ENCODE measurements at regions of chr22 and their contacts with region 1.

Region 1: DNA sequence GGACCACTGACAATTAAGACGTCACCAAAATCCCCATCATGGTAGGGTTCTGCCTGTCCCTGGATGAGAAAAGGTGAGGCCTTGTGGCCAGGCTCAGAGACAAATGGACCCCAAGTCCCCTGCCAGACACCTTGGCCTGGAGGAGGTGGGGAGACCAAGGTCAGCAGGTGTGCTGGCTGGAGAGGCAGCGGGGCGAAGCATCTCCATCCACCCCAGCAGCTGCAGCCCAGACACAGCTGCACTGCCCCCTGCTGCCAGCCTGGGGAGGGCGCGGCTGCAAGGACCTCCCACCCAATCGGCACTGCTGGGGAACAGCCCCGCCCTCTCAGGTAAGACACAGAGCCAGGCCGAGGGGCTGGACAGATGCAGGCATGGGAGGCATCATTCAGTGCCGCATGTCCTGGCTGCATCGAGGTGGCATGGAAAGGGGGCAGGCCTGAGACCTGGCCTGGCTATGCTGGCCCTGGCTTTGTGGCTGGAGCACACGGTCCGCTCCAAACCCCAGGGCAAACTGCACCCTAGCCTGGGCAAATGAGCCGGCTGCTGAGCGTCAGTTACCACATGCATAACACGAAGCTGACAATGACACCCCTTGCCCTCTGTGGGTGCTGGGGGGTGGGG is 12.2 kb upstream of the MFNG start:
- DNase-seq: peak; percentile 90
- ATAC-seq: peak; percentile 92
- H3K4me3 Mint-ChIP-seq: no peak overlapping the region
- H3K27ac Mint-ChIP-seq: no peak overlapping the region
- H3K4me1 Mint-ChIP-seq: peaks cover 34% of the 10 kb centered on the region
- H3K27me3 Mint-ChIP-seq: no peaks in the 10 kb centered on the region
- CTCF ChIP-seq: peak; percentile 78

Region 2: GRCh38 chr22:37486224-37486845 is 12.1 kb before region 1 on chr22 and contains the start of gene MFNG:
- CTCF ChIA-PET with region 1: interaction called, 62 read pairs
- POLR2A ChIA-PET with region 1: interaction called, 3 read pairs
- DNase-seq: peak; percentile 75
- ATAC-seq: peak; percentile 92
- H3K4me3 Mint-ChIP-seq: peak within 1 kb of the TSS; percentile 56
- H3K27ac Mint-ChIP-seq: peak within 1 kb of the TSS; percentile 47
- H3K4me1 Mint-ChIP-seq: peaks cover 54% of the 10 kb centered on the region
- H3K27me3 Mint-ChIP-seq: no peaks in the 10 kb centered on the region
- CTCF ChIP-seq: no peak
- total RNA-seq, gene MFNG: 3.2 to 4.8 TPM (median 3.7 TPM) in 3 replicates

Region 3: GRCh38 chr22:37508431-37508992 is 10.1 kb after region 1 on chr22:
- CTCF ChIA-PET with region 1: interaction called, 19 read pairs
- POLR2A ChIA-PET with region 1: no interaction called
- DNase-seq: no peak
- ATAC-seq: peak; percentile 35
- H3K4me3 Mint-ChIP-seq: no peak overlapping the region
- H3K27ac Mint-ChIP-seq: no peak overlapping the region
- H3K4me1 Mint-ChIP-seq: peaks cover 8% of the 10 kb centered on the region
- H3K27me3 Mint-ChIP-seq: no peaks in the 10 kb centered on the region
- CTCF ChIP-seq: no peak

Measured in WTC11 (cell line).